ENCODE measurements at regions of chr1 and their contacts with region 1.

Region 1: DNA sequence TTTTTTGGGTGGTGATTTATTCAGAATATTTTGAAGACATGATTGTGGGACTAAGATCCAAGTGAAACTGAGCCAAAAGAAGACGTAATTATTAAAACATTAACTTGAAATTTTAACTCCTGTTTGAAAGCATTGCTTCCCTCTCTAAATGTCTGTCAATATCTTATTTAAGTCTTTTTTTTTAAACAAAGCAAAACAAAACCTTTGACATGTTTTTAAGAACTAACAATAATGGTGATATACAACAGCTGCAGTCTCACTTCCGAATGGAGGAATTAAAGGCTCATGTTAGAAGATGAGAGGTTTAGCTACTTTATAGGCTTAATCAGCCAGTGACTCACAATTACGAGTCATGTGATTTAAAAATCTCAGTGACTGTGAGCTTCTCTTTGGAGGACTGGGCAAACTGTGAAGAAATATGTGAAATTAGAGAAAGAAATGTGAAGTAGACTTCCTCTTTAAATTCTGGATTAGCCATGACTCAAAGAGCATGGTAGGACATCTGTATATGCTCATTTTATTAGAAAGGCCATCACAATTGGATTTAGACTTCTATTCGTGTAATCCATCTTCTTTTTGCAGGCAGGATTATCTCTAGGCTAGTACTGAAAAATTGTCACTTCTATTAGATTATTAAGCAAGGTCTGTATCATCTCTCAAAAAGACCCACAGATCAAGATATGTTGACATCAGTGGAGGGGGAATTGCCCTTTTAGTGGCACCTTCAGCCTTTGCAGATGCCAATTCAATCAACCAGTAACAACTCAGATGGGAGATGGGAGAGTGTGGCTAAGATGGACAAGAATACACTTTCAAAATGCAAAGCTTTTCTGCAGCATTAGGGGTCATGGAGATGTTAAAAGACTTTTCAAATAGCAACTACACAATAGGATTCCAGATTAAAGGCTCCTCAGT is 28.7 kb downstream of the KCNA3 start:
- DNase-seq: no peak
- H3K4me3 ChIP-seq: peak overlapping the region in 1 of 2 donors; percentile 2
- H3K4me3 Mint-ChIP-seq: peak overlapping the region in 5 of 8 donors; percentile 21 to 66 (median 44)
- H3K27ac ChIP-seq: peak overlapping the region; percentile 56
- H3K27ac Mint-ChIP-seq: peak overlapping the region in 6 of 7 donors; percentile 31 to 83 (median 62)
- H3K4me1 ChIP-seq: peaks cover 99% of the 10 kb centered on the region
- H3K4me1 Mint-ChIP-seq: peaks cover 11 to 51% (median 40%) of the 10 kb centered on the region in 4 donors
- H3K27me3 ChIP-seq: no peaks in the 10 kb centered on the region
- H3K27me3 Mint-ChIP-seq: no peaks in the 10 kb centered on the region

Region 2: DNA sequence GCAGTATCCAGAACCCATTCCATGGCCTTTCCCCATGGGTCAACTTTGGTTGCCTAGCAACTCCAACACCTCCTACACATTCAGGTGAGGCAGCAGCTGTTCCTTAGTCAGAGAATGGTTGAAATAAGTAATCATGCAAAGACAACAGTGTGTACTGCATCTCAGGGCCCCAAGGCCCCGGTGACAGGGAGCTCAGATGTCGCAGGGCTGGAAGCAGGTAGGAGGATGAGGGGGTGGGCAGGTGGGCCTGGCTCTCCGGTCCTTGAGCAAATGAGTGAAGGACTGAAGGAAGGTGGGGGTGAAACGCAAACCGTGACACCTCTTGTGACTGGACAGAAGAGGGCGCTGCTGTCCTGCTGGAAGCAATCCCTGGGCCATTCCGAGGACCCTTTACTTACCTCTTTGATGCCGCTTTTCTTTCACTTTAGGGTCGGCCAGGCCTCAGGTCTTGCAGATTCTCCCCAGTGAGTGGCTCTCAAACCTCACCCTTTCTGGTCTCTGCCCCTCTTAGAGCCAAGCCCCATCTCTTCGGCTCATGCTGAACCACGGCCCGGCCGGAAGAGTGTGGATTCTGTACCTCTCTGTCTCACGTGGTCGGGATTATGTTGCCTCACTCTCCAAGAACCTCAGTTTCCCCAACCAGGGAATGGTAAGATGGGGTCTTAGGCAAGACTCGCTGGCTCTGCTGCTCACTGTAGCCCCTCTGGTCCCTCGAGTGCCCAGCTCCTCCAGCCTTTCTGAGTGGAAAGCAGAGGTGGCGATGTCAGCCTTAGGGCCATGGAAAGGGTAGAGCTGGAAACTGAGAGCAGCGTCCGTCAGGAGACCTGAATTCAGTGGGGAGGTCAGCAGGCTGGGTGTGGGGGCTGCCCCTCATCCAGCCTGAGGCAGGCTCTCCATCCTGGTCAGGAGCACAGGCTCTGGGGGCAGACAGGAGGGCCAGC is 121.5 kb before region 1 on chr1:
- CTCF ChIA-PET with region 1: no interaction called
- POLR2A ChIA-PET with region 1: no interaction called
- intact Hi-C with region 1: no loop called
- DNase-seq: peak in 4 of 5 donors; percentile 25 to 48 (median 44)
- H3K4me3 ChIP-seq: no peak overlapping the region
- H3K4me3 Mint-ChIP-seq: peak overlapping the region in 5 of 8 donors; percentile 14 to 61 (median 51)
- H3K27ac ChIP-seq: no peak overlapping the region
- H3K27ac Mint-ChIP-seq: no peak overlapping the region
- H3K4me1 ChIP-seq: no peaks in the 10 kb centered on the region
- H3K4me1 Mint-ChIP-seq: peaks cover 0 to 6% (median 2%) of the 10 kb centered on the region in 4 donors
- H3K27me3 ChIP-seq: peaks cover 5% of the 10 kb centered on the region
- H3K27me3 Mint-ChIP-seq: peaks cover 15 to 28% of the 10 kb centered on the region in 2 donors

Region 3: GRCh38 chr1:110542725-110543124 is 103.4 kb before region 1 on chr1:
- CTCF ChIA-PET with region 1: no interaction called
- POLR2A ChIA-PET with region 1: no interaction called
- intact Hi-C with region 1: no loop called
- DNase-seq: no peak
- H3K4me3 ChIP-seq: no peak overlapping the region
- H3K4me3 Mint-ChIP-seq: no peak overlapping the region
- H3K27ac ChIP-seq: no peak overlapping the region
- H3K27ac Mint-ChIP-seq: no peak overlapping the region
- H3K4me1 ChIP-seq: no peaks in the 10 kb centered on the region
- H3K4me1 Mint-ChIP-seq: no peaks in the 10 kb centered on the region
- H3K27me3 ChIP-seq: no peaks in the 10 kb centered on the region
- H3K27me3 Mint-ChIP-seq: peaks cover 8 to 13% of the 10 kb centered on the region in 2 donors

Region 4: GRCh38 chr1:110605901-110606656 is 40.0 kb before region 1 on chr1 and contains the start of gene KCNA2:
- CTCF ChIA-PET with region 1: no interaction called
- POLR2A ChIA-PET with region 1: no interaction called
- intact Hi-C with region 1: no loop called
- DNase-seq: peak in 1 of 5 donors; percentile 15
- H3K4me3 ChIP-seq: peak within 1 kb of the TSS; percentile 54 to 59
- H3K4me3 Mint-ChIP-seq: peak within 1 kb of the TSS; percentile 81 to 90 (median 84)
- H3K27ac ChIP-seq: no peak within 1 kb of the TSS
- H3K27ac Mint-ChIP-seq: peak within 1 kb of the TSS in 1 of 7 donors; percentile 47
- H3K4me1 ChIP-seq: peaks cover 21% of the 10 kb centered on the region
- H3K4me1 Mint-ChIP-seq: peaks cover 6 to 30% (median 16%) of the 10 kb centered on the region in 4 donors
- H3K27me3 ChIP-seq: peaks cover 31% of the 10 kb centered on the region
- H3K27me3 Mint-ChIP-seq: peaks cover 25 to 47% of the 10 kb centered on the region in 2 donors
- total RNA-seq, gene KCNA2: 1.2 to 2.2 TPM

Region 5: DNA sequence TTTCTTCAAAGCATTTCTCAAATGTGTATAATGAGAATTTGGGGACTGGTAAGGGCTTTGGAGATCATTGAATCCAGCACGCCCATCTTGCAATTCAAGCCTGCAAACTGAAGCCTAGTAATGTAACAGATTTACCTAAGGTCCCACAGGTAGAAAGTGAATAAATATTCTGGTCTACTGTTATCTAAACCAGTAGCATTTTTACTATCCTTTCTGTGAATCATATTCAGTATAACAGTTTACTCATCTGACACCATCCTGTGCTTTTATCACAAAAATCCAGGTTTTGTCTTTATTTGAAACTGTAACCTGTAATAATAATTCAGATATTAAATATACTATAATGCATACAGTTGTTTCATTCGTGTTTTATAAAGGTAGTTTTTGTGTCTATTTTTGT is 11.3 kb after region 1 on chr1:
- CTCF ChIA-PET with region 1: interaction called, 13 read pairs
- POLR2A ChIA-PET with region 1: interaction called, 993 read pairs
- intact Hi-C with region 1: no loop called
- DNase-seq: no peak
- H3K4me3 ChIP-seq: no peak overlapping the region
- H3K4me3 Mint-ChIP-seq: peak overlapping the region in 1 of 8 donors; percentile 41
- H3K27ac ChIP-seq: no peak overlapping the region
- H3K27ac Mint-ChIP-seq: peak overlapping the region in 4 of 7 donors; percentile 49 to 70 (median 64)
- H3K4me1 ChIP-seq: peaks cover 50% of the 10 kb centered on the region
- H3K4me1 Mint-ChIP-seq: peaks cover 31 to 64% (median 48%) of the 10 kb centered on the region in 4 donors
- H3K27me3 ChIP-seq: no peaks in the 10 kb centered on the region
- H3K27me3 Mint-ChIP-seq: no peaks in the 10 kb centered on the region

Region 6: DNA sequence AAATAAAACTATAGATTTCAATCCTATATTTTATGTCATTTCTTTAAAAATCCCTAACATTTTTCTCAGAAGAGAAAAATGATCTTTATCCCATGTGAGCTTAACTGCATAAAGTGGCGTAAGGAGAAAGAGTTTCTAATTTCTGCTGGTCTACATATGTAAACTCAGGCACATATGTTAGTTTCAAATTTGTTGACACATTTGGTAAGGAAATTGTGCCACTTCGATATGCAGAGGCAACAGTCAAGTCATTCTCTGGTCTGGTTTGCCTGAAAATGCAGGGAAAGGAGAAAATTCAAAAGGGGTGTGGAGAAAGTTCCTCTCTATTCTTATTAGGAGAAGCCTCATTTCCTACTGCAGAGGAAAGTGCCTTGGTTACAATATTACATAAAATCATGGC is 17.2 kb after region 1 on chr1:
- CTCF ChIA-PET with region 1: interaction called, 16 read pairs
- POLR2A ChIA-PET with region 1: interaction called, 993 read pairs
- intact Hi-C with region 1: no loop called
- DNase-seq: no peak
- H3K4me3 ChIP-seq: no peak overlapping the region
- H3K4me3 Mint-ChIP-seq: peak overlapping the region in 2 of 8 donors; percentile 11 to 45
- H3K27ac ChIP-seq: no peak overlapping the region
- H3K27ac Mint-ChIP-seq: peak overlapping the region in 4 of 7 donors; percentile 35 to 78 (median 44)
- H3K4me1 ChIP-seq: peaks cover 70% of the 10 kb centered on the region
- H3K4me1 Mint-ChIP-seq: peaks cover 24 to 34% (median 30%) of the 10 kb centered on the region in 4 donors
- H3K27me3 ChIP-seq: no peaks in the 10 kb centered on the region
- H3K27me3 Mint-ChIP-seq: no peaks in the 10 kb centered on the region

Region 7: GRCh38 chr1:110668549-110668948 is 22.5 kb after region 1 on chr1:
- CTCF ChIA-PET with region 1: interaction called, 23 read pairs
- POLR2A ChIA-PET with region 1: interaction called, 993 read pairs
- intact Hi-C with region 1: loop called (anchors 1 kb)
- DNase-seq: peak; percentile 36 to 54 (median 49)
- H3K4me3 ChIP-seq: peak overlapping the region; percentile 52 to 68
- H3K4me3 Mint-ChIP-seq: peak overlapping the region; percentile 68 to 89 (median 84)
- H3K27ac ChIP-seq: peak overlapping the region; percentile 91
- H3K27ac Mint-ChIP-seq: peak overlapping the region in 6 of 7 donors; percentile 77 to 94 (median 89)
- H3K4me1 ChIP-seq: peaks cover 76% of the 10 kb centered on the region
- H3K4me1 Mint-ChIP-seq: peaks cover 19 to 40% (median 23%) of the 10 kb centered on the region in 4 donors
- H3K27me3 ChIP-seq: no peaks in the 10 kb centered on the region
- H3K27me3 Mint-ChIP-seq: no peaks in the 10 kb centered on the region